ENCODE measurements at regions of chr10 and their contacts with region 1.

Region 1: DNA sequence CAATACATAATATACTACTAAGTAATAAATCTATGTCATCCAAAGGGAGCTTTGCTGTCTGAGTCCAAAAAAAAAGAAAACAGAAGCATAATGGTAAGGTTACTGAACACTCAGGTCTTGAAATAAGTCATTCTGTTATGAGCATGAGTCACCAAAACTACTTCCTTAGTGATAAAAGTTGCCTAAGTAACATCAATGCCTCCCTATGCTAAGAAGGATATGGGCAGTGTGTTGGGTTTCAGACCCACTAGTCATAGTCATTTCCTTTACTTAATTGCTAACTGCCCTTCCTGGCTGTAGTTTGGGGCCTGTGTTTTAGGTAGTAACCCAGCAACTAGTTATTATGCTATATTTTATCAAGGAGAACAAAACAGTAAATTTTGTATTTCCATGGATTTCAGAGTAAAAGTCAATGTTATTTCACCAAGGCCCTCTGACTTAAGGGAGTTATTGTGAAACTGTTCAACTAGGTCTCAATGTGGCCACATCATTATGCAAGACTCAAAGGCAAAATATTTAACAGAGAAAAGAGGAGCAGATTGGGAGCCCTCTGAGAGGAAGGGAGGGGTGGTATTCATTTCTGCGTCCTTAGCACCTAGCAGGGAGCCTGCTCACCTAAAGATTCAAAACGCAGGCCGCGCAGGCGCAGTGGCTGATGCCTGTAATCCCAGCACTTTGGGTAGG is 11.7 kb upstream of the VIM start:
- DNase-seq: no peak
- ATAC-seq: peak; percentile 92
- H3K4me3 ChIP-seq: no peak overlapping the region
- H3K27ac ChIP-seq: peak overlapping the region; percentile 80 to 100
- H3K4me1 ChIP-seq: peaks cover 0 to 4% of the 10 kb centered on the region in 2 donors
- H3K27me3 ChIP-seq: no peaks in the 10 kb centered on the region

Region 2: GRCh38 chr10:16891375-16892313 is 324.7 kb before region 1 on chr10:
- intact Hi-C with region 1: no loop called
- DNase-seq: peak; percentile 51 to 83
- ATAC-seq: peak; percentile 91
- H3K4me3 ChIP-seq: no peak overlapping the region
- H3K27ac ChIP-seq: no peak overlapping the region
- H3K4me1 ChIP-seq: peaks cover 0 to 4% of the 10 kb centered on the region in 2 donors
- H3K27me3 ChIP-seq: no peaks in the 10 kb centered on the region

Region 3: GRCh38 chr10:17062955-17063484 is 153.3 kb before region 1 on chr10:
- intact Hi-C with region 1: loop called in 1 of 2 experiments (anchors 5 kb)
- DNase-seq: peak; percentile 81 to 86
- ATAC-seq: peak; percentile 88
- H3K4me3 ChIP-seq: no peak overlapping the region
- H3K27ac ChIP-seq: peak overlapping the region; percentile 23 to 100
- H3K4me1 ChIP-seq: peaks cover 0 to 2% of the 10 kb centered on the region in 2 donors
- H3K27me3 ChIP-seq: no peaks in the 10 kb centered on the region

Region 4: DNA sequence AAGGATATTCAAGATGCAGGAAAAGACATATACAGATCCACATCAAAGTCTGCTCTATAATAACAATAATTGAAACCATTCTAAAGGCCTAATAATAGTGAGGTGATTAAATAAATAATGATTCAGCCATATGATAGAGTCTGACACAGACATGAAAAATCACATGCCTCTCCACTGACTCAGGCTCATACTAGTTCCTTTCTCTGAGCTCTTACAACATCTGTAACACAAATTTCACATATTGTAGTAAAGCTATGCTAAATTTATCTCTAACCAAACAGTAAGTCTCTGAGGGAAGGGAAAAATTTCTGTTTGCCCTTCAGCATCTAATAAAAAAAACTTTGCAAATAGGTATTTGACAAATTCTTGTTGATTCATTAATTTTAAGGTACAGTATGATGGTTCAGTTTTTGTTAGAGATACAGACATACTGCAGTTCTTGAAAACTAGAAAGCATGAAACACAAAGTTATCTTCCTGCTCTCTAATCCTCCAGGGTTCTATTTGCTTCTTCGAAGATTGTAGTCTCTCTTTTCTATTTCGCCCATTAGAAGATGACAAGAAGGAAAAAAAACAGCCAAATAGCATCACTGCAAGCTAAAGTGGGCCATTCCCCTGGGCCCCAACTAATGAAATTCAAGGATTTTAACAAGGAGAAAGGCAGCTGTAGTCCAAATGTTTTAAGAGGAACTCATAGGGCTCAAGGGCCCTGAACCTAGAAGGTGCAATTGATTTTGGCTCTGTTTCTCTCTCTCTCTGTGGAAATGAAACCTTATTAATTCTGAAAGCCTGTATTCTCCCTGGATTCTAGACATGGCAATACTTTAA is 140.6 kb before region 1 on chr10:
- intact Hi-C with region 1: loop called in 1 of 2 experiments (anchors 5 kb)
- DNase-seq: no peak
- ATAC-seq: peak; percentile 84
- H3K4me3 ChIP-seq: peak overlapping the region in 1 of 2 donors; percentile 26
- H3K27ac ChIP-seq: peak overlapping the region; percentile 84 to 90
- H3K4me1 ChIP-seq: peaks cover 2 to 9% of the 10 kb centered on the region in 2 donors
- H3K27me3 ChIP-seq: no peaks in the 10 kb centered on the region

Region 5: GRCh38 chr10:17153296-17153695 is 63.1 kb before region 1 on chr10:
- intact Hi-C with region 1: loop called in 1 of 2 experiments (anchors 5 kb)
- DNase-seq: no peak
- ATAC-seq: no peak
- H3K4me3 ChIP-seq: no peak overlapping the region
- H3K27ac ChIP-seq: peak overlapping the region; percentile 97
- H3K4me1 ChIP-seq: peaks cover 3 to 5% of the 10 kb centered on the region in 2 donors
- H3K27me3 ChIP-seq: no peaks in the 10 kb centered on the region

Region 6: DNA sequence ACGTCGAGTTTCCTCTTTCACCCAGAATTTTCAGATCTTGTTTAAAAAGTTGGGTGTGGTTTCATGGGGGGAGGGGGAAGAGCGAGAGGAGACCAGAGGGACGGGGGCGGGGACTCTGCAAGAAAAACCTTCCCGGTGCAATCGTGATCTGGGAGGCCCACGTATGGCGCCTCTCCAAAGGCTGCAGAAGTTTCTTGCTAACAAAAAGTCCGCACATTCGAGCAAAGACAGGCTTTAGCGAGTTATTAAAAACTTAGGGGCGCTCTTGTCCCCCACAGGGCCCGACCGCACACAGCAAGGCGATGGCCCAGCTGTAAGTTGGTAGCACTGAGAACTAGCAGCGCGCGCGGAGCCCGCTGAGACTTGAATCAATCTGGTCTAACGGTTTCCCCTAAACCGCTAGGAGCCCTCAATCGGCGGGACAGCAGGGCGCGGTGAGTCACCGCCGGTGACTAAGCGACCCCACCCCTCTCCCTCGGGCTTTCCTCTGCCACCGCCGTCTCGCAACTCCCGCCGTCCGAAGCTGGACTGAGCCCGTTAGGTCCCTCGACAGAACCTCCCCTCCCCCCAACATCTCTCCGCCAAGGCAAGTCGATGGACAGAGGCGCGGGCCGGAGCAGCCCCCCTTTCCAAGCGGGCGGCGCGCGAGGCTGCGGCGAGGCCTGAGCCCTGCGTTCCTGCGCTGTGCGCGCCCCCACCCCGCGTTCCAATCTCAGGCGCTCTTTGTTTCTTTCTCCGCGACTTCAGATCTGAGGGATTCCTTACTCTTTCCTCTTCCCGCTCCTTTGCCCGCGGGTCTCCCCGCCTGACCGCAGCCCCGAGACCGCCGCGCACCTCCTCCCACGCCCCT is 12.0 kb after region 1 on chr10 and contains the start of gene VIM:
- intact Hi-C with region 1: loop called in 1 of 2 experiments (anchors 1 kb)
- DNase-seq: peak; percentile 98
- ATAC-seq: peak; percentile 90
- H3K4me3 ChIP-seq: peak within 1 kb of the TSS; percentile 47 to 96
- H3K27ac ChIP-seq: peak within 1 kb of the TSS; percentile 91 to 95
- H3K4me1 ChIP-seq: peaks cover 0 to 2% of the 10 kb centered on the region in 2 donors
- H3K27me3 ChIP-seq: no peaks in the 10 kb centered on the region
- total RNA-seq, gene VIM: 3,936 to 5,947 TPM

Measured in aorta (tissue), 5 donors.